Activated CD8-positive, alpha-beta T cell treated with anti-CD3 and anti-CD28 coated beads, Interleukin-2, amount 10 ng/mL, durations not matched to agents 7 days and 5 days (primary cell): ENCODE measurements at regions of chr1 and their contacts with region 1.

Region 1: GRCh38 chr1:150235852-150236613 is at the start of gene ANP32E:
- DNase-seq: peak; percentile 97
- ATAC-seq: peak; percentile 89
- H3K4me3 Mint-ChIP-seq: no peak within 1 kb of the TSS
- H3K27ac Mint-ChIP-seq: no peak within 1 kb of the TSS
- H3K4me1 Mint-ChIP-seq: peaks cover 21% of the 10 kb centered on the region
- H3K27me3 Mint-ChIP-seq: peaks cover 7% of the 10 kb centered on the region
- total RNA-seq, gene ANP32E: 155 to 161 TPM

Region 2: GRCh38 chr1:150213170-150214098 is 22.6 kb before region 1 on chr1:
- CTCF ChIA-PET with region 1: interaction called, 4 read pairs
- POLR2A ChIA-PET with region 1: interaction called, 32 read pairs
- DNase-seq: peak; percentile 97
- ATAC-seq: peak; percentile 100
- H3K4me3 Mint-ChIP-seq: peak overlapping the region; percentile 85
- H3K27ac Mint-ChIP-seq: peak overlapping the region; percentile 97
- H3K4me1 Mint-ChIP-seq: peaks cover 20% of the 10 kb centered on the region
- H3K27me3 Mint-ChIP-seq: peaks cover 3% of the 10 kb centered on the region

Region 3: DNA sequence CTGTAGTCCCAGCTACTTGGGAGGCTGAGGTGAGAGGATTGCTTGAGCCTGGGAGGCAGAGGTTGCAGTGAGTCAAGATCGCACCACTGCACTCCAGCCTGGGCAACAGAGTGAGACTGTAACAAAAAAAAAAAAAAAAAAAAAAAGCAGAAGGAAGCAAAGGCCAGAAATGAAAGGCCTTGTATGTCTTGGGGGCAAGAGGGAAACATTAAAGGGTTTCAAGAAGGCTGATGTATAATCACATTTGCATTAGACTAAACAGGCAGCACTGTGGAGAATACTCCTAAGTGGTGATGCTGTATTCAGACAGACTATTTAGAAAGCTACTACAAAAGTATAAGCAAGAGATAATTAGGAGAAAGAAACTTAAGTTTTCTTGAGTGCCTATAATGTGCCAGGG is 10.5 kb before region 1 on chr1:
- CTCF ChIA-PET with region 1: interaction called, 6 read pairs
- POLR2A ChIA-PET with region 1: interaction called, 18 read pairs
- DNase-seq: no peak
- ATAC-seq: no peak
- H3K4me3 Mint-ChIP-seq: no peak overlapping the region
- H3K27ac Mint-ChIP-seq: no peak overlapping the region
- H3K4me1 Mint-ChIP-seq: peaks cover 13% of the 10 kb centered on the region
- H3K27me3 Mint-ChIP-seq: no peaks in the 10 kb centered on the region